Psoas muscle (tissue), 8 donors: ENCODE measurements at regions of chr20 and their contacts with region 1.

Region 1: DNA sequence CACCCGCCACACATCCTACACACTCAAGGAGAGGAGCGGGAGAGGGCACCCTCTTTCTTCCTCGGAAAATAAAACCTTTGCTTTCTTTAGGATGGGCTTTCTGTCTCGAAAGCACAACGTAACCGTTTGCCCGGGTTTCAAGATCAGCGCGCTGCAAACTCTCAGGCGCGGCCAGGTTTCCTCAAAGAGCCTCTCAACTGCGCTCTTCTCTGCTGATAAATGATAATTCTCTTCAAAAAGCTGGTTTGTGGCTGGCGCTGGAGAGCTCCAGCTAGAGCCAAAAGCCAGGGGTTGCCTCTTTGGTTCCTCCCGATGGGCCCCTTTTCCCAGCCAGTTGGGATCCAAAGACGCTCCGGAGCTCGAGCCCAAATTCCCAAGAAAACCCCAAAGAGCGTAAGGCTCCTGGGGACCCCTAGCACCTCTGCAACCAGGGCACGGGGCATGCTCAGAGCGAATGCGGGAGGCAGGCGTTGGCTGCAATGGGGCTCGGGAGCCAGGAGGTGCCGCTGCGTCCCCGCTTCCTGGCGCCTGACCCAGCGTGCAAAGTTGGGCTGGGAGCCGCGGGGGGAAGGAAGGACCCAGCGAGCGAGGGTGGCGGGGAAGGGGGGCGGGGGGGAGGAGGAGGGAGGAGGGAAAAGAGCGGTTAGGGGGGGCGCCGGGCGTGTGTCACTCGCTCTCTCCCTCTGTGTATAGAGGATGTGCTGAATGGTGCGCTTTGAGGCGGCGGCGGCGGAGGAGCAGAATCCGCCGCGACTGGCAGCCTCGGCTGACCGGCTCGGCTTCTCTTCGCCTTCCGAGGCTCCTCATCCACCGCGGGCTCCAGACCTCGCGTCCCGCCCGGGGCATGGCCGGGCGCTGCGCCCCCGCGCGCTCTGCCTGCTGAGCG is at the start of gene PLCB1:
- DNase-seq: peak; percentile 87 to 94
- ATAC-seq: peak; percentile 96 to 97 (median 96)
- H3K4me3 ChIP-seq: peak within 1 kb of the TSS; percentile 90
- H3K27ac ChIP-seq: peak within 1 kb of the TSS; percentile 74
- H3K4me1 ChIP-seq: peaks cover 7% of the 10 kb centered on the region
- H3K27me3 ChIP-seq: no peaks in the 10 kb centered on the region
- CTCF ChIP-seq: peak; percentile 83
- total RNA-seq, gene PLCB1: 4.2 to 10.7 (median 6.9) TPM

Region 2: GRCh38 chr20:7078813-7079212 is 1053.0 kb before region 1 on chr20:
- intact Hi-C with region 1: no loop called
- DNase-seq: no peak
- ATAC-seq: no peak
- H3K4me3 ChIP-seq: no peak overlapping the region
- H3K27ac ChIP-seq: no peak overlapping the region
- H3K4me1 ChIP-seq: no peaks in the 10 kb centered on the region
- H3K27me3 ChIP-seq: no peaks in the 10 kb centered on the region
- CTCF ChIP-seq: no peak

Region 3: GRCh38 chr20:7449269-7449668 is 682.6 kb before region 1 on chr20:
- intact Hi-C with region 1: no loop called
- DNase-seq: no peak
- ATAC-seq: no peak
- H3K4me3 ChIP-seq: no peak overlapping the region
- H3K27ac ChIP-seq: no peak overlapping the region
- H3K4me1 ChIP-seq: no peaks in the 10 kb centered on the region
- H3K27me3 ChIP-seq: no peaks in the 10 kb centered on the region
- CTCF ChIP-seq: no peak

Region 4: DNA sequence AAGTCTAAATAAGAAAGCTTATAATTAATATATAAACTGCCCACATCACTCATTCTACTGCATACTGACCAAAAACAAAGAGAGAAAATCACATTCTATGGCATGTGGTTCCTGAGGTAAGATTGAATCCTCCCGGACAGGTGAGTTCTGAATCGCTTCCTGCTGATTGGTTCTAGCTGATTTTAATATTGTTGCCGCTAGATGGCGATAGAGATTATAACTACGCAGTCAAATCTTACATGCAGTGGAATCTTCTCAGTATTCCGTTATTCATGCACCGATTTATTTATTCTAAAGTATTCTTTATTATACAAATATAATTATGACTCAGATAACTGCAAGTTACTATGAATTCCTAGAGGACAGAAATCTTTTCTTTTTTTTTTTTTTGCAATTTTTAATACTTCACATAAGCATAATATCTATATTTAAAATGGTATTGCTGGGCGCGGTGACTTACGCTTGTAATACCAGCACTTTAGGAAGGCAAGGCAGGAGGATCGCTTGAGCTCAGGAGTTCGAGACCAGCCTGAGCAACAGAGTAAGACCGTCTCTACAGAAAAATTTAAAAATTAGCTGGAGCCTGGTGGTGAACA is 88.1 kb before region 1 on chr20:
- intact Hi-C with region 1: loop called in 1 of 2 experiments (anchors 5 kb)
- DNase-seq: no peak
- ATAC-seq: peak; percentile 59 to 93 (median 72)
- H3K4me3 ChIP-seq: no peak overlapping the region
- H3K27ac ChIP-seq: no peak overlapping the region
- H3K4me1 ChIP-seq: no peaks in the 10 kb centered on the region
- H3K27me3 ChIP-seq: no peaks in the 10 kb centered on the region
- CTCF ChIP-seq: peak; percentile 85

Region 5: GRCh38 chr20:8244637-8245036 is 112.8 kb after region 1 on chr20:
- intact Hi-C with region 1: loop called in 1 of 2 experiments (anchors 5 kb)
- DNase-seq: no peak
- ATAC-seq: peak in 3 of 4 donors; percentile 46 to 75 (median 60)
- H3K4me3 ChIP-seq: no peak overlapping the region
- H3K27ac ChIP-seq: peak overlapping the region; percentile 67
- H3K4me1 ChIP-seq: peaks cover 30% of the 10 kb centered on the region
- H3K27me3 ChIP-seq: no peaks in the 10 kb centered on the region
- CTCF ChIP-seq: no peak

Region 6: DNA sequence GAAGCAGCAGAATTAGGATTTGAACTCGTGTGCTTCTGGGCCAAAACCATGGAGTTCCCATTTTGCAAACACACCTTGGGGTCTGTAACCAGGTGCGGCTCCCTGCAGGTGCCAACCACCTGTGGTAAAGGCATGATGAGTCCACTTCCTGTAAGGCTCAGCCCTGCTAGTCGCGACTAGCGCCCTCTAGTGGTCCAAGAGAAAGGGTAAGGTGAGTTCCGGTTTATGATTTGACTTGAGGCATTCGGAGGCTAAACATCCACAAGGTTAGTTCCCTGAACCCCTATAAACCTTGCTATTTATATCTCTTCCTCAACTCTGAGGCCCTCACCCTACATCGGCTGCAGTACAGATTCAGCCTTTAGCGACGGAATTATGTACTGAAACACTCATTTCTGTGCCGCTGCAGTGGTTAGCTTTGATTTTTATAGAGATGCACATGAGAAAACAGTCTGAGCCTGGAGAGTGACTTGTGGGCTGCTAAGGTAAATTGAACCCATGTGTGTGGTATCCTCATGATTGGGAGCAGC is 173.7 kb after region 1 on chr20:
- intact Hi-C with region 1: loop called (anchors 5 kb)
- DNase-seq: peak in 1 of 2 donors; percentile 19
- ATAC-seq: peak in 3 of 4 donors; percentile 44 to 80 (median 69)
- H3K4me3 ChIP-seq: no peak overlapping the region
- H3K27ac ChIP-seq: no peak overlapping the region
- H3K4me1 ChIP-seq: peaks cover 18% of the 10 kb centered on the region
- H3K27me3 ChIP-seq: no peaks in the 10 kb centered on the region
- CTCF ChIP-seq: peak; percentile 59

Region 7: GRCh38 chr20:8545212-8545611 is 413.4 kb after region 1 on chr20:
- intact Hi-C with region 1: loop called in 1 of 2 experiments (anchors 10 kb)
- DNase-seq: no peak
- ATAC-seq: no peak
- H3K4me3 ChIP-seq: no peak overlapping the region
- H3K27ac ChIP-seq: no peak overlapping the region
- H3K4me1 ChIP-seq: peaks cover 2% of the 10 kb centered on the region
- H3K27me3 ChIP-seq: no peaks in the 10 kb centered on the region
- CTCF ChIP-seq: no peak

Region 8: GRCh38 chr20:8722276-8722928 is 590.6 kb after region 1 on chr20:
- intact Hi-C with region 1: loop called (anchors 1 to 5 kb)
- DNase-seq: no peak
- ATAC-seq: peak; percentile 69 to 92 (median 85)
- H3K4me3 ChIP-seq: no peak overlapping the region
- H3K27ac ChIP-seq: no peak overlapping the region
- H3K4me1 ChIP-seq: no peaks in the 10 kb centered on the region
- H3K27me3 ChIP-seq: no peaks in the 10 kb centered on the region
- CTCF ChIP-seq: peak; percentile 84